ENCODE measurements at regions of chr11 and their contacts with region 1.

Region 1: DNA sequence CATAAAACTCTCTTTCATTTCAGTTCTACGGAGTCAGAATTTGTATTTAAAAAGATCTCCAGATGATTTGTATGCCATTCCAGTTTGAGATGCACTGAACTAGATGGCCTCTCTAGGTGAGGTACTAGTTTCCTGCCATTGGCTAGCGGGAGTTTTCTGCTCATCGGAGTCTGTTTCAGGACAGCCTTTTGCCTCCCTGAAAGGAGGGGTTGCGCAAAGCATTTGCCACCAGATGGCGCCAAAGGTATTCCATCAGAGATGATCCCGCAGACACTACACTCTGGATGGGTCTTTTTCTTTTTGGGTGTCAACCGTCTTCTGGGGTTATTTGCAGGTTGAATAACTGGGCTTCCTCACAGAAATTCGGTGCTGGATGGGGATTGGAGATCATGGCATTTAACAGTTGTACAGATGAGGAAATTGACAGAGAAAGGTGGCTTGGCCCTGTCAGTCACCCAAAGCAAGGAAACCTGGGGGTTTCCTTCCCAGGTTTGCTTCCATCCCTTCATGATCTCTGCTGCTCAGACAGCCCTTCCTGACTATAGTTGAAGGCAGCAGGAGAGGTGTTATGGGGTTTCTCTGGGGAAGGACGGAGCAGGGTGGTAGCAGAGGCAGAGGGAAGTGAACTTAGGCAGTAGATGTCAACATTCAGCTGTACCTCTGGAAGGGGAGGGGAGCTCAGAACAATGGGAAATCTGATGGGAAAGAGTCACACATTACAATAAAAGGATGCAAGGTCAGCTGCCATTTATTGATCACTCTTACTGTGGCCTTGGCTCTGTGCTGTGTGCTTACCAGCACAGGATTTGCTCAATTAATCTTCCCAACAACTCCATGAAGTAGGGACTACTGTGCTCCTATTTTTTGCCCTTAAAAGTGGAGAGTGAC is 81.6 kb downstream of the CCDC81 start:
- DNase-seq: peak; percentile 89
- ATAC-seq: peak; percentile 81 to 86

Region 2: GRCh38 chr11:86497181-86497701 is 40.9 kb after region 1 on chr11:
- intact Hi-C with region 1: no loop called
- DNase-seq: no peak
- ATAC-seq: peak in 1 of 2 donors; percentile 6

Region 3: DNA sequence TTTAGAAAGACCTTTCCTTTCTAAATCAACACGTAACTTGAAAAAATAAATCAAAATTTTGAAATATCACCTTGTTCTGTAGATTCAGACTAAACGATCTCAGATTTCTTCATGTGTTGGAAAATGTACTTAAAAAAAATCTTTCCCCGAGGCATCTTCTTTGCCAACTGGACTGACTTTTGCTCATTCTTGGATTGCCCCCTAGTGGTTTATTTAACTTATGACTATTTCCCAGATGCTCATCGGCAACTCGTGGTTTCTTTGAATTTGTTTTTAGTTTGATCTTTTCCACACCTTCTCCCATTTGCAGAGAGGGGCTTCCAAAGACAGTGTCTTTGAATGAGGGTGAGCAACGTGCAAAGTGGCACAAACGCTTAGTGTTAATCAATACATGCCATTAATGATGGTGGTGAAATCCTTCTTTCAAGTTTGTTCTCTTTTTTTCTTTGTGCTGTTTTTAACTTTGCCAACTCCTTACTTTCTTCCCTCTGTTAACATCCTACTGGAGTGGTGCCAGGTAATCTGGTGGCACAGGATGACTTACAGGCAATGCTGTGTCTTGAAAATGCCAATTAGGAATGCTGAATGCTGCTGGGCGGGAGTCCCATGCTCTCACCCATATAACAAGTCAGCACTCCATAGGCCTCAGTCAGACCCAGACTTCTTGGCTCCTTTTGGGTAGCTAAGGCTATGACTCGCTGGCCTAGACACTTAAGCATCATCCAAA is 362.3 kb after region 1 on chr11:
- intact Hi-C with region 1: loop called (anchors 2 kb)
- DNase-seq: no peak
- ATAC-seq: peak; percentile 33 to 41

Region 4: DNA sequence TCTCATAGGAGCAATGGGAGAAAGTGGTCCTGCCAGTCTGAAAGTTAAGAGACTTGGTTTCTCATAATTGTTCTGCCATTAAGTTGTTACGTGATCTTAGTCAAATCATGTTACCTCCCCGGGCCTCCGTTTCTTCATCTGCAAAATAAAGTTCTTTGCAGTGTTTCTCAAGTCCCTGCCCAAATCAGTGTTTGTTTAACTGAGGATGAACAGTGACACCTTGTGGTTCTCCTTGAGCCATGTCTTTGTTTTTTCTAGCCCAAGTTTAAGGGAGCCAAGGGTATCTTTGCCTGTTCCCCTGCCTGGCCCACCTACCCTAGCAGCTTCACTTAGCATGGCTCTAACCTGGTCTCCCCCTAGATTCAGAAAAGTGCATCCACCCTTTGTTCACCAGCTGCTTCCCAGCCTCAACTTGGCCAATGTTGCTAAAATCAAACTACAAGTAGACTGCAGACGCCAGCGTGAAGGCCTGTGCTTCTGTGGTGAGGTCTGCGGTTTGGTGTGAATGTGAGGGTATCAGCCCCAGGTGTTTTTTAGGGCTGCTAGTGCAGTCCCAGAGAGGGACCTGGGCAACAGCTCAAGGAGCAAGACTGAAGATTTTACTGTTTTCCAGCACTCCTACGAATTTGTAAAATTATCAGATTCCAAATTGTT is 463.4 kb after region 1 on chr11:
- intact Hi-C with region 1: loop called in 1 of 2 experiments (anchors 10 kb)
- DNase-seq: no peak
- ATAC-seq: peak; percentile 36 to 62

Measured in left cardiac atrium (tissue), 4 donors.